ENCODE measurements at regions of chr15 and their contacts with region 1.

Region 1: GRCh38 chr15:39782441-39783138 is at the start of gene FSIP1:
- DNase-seq: peak; percentile 97 to 98
- H3K4me3 ChIP-seq: peak within 1 kb of the TSS; percentile 67 to 77
- H3K27ac ChIP-seq: peak within 1 kb of the TSS; percentile 63 to 67
- H3K4me1 ChIP-seq: peaks cover 0 to 18% (median 12%) of the 10 kb centered on the region in 4 donors
- H3K27me3 ChIP-seq: no peaks in the 10 kb centered on the region
- CTCF ChIP-seq: no peak

Region 2: GRCh38 chr15:39728845-39729244 is 53.7 kb before region 1 on chr15:
- intact Hi-C with region 1: no loop called
- DNase-seq: no peak
- H3K4me3 ChIP-seq: no peak overlapping the region
- H3K27ac ChIP-seq: no peak overlapping the region
- H3K4me1 ChIP-seq: no peaks in the 10 kb centered on the region
- H3K27me3 ChIP-seq: no peaks in the 10 kb centered on the region
- CTCF ChIP-seq: no peak

Region 3: GRCh38 chr15:39934397-39935071 is 151.9 kb after region 1 on chr15:
- intact Hi-C with region 1: loop called (anchors 5 kb)
- DNase-seq: no peak
- H3K4me3 ChIP-seq: peak overlapping the region; percentile 68 to 69
- H3K27ac ChIP-seq: peak overlapping the region; percentile 75 to 80
- H3K4me1 ChIP-seq: peaks cover 0 to 47% (median 9%) of the 10 kb centered on the region in 4 donors
- H3K27me3 ChIP-seq: no peaks in the 10 kb centered on the region
- CTCF ChIP-seq: no peak

Region 4: DNA sequence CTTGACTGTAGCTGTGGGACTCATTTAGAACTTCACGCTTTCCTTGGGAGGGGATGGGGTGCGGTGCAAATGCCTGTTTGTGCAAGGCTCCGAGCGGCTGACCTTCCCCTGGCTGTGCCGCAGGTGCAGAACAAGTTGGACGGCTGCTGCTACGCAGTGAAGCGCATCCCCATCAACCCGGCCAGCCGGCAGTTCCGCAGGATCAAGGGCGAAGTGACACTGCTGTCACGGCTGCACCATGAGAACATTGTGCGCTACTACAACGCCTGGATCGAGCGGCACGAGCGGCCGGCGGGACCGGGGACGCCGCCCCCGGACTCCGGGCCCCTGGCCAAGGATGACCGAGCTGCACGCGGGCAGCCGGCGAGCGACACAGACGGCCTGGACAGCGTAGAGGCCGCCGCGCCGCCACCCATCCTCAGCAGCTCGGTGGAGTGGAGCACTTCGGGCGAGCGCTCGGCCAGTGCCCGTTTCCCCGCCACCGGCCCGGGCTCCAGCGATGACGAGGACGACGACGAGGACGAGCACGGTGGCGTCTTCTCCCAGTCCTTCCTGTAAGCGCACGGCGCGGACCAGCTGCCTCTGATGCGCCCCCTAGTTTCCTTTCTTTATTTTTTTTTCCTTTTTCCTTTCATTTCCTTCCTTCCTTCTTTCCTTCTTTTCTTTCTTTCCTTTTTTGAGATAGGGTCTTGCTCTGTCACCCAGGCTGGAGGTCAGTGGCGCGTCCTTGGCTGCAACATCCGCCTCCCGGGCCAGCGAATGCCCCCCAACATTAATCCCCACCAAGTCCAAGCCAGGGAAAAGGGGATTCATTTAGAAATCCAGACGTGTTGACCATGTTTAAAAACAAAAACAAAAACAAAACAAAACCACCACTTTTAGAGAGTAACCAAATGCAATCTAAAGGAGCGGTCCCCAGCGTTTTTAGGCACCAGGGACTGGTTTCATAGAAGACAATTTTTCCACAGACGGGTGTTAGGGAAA is 194.0 kb after region 1 on chr15:
- intact Hi-C with region 1: loop called (anchors 5 kb)
- DNase-seq: peak; percentile 64 to 79
- H3K4me3 ChIP-seq: peak overlapping the region; percentile 59 to 62
- H3K27ac ChIP-seq: peak overlapping the region; percentile 63 to 71
- H3K4me1 ChIP-seq: peaks cover 0 to 11% (median 1%) of the 10 kb centered on the region in 4 donors
- H3K27me3 ChIP-seq: no peaks in the 10 kb centered on the region
- CTCF ChIP-seq: peak; percentile 47 to 52

Measured in tibial artery (tissue), 4 donors.